A549 (cell line): ENCODE measurements at regions of chr7 and their contacts with region 1.

Region 1: DNA sequence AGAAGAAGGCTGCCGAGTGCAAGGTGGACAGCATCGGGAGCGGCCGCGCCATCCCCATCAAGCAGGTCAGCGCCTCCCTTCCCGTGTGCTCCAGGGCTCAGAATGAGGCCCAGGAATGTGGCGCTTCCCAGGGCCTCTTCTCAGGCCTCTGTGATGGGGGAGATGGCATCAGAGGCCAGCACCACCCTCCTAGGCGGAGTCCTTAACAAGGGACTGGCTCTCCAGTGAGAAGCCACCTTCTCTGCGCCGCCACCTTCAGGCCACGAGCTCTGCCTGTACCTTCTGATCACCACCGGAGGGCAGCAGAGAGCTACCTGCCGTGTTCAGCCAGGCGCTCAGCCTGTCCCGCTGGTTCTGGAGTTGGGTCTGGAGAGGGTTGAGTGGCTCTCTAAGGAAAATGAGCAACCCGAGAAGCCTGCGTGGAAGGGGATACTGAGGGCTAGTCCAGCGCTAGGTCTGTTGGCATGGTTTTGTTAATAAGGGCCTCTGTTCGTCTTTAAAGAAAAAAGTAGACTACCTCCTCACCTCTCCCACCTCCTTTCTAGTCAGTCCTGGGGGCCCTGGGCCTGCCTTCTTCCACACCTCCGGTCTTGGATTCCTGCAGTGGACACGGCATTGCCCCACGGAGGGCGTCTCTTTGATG is 37.7 kb downstream of the AGAP3 start:
- DNase-seq: peak; percentile 85 to 94
- ATAC-seq: peak; percentile 90 to 96
- H3K4me3 ChIP-seq: no peak overlapping the region
- H3K27ac ChIP-seq: no peak overlapping the region
- H3K4me1 ChIP-seq: no peaks in the 10 kb centered on the region
- CTCF ChIP-seq: peak; percentile 97
- EP300 ChIP-seq: no peak
- POLR2A ChIP-seq: no peak
- RAD21 ChIP-seq: peak; percentile 85 to 87

Region 2: GRCh38 chr7:150793569-150794238 is 330.2 kb before region 1 on chr7:
- CTCF ChIA-PET with region 1: no interaction called
- POLR2A ChIA-PET with region 1: no interaction called
- DNase-seq: no peak
- ATAC-seq: no peak
- H3K4me3 ChIP-seq: no peak overlapping the region
- H3K27ac ChIP-seq: no peak overlapping the region
- H3K4me1 ChIP-seq: no peaks in the 10 kb centered on the region
- CTCF ChIP-seq: no peak
- EP300 ChIP-seq: no peak
- POLR2A ChIP-seq: no peak
- RAD21 ChIP-seq: no peak

Region 3: DNA sequence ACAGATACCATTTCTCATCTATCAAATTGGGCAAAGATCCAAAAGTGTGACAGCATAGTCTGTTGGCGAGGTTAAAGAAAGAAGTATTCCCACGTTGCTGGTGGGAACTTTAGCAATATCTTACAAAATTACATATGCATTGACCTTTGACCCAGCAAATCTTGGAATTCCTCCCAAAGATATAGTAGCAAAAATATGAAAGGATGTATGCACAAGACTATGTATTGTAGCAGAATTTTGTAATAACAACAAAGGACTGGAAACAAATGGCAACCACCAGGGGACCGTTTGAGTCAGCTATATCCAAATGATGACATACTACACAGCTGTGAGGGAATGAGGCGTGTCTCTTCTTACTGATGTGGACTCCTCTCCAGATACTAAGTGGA is 196.0 kb before region 1 on chr7:
- CTCF ChIA-PET with region 1: no interaction called
- POLR2A ChIA-PET with region 1: no interaction called
- DNase-seq: peak; percentile 27 to 38
- ATAC-seq: peak; percentile 72 to 78
- H3K4me3 ChIP-seq: no peak overlapping the region
- H3K27ac ChIP-seq: no peak overlapping the region
- H3K4me1 ChIP-seq: no peaks in the 10 kb centered on the region; the same call in 2 of the 3 replicates
- CTCF ChIP-seq: no peak
- EP300 ChIP-seq: no peak
- POLR2A ChIP-seq: no peak
- RAD21 ChIP-seq: no peak

Region 4: DNA sequence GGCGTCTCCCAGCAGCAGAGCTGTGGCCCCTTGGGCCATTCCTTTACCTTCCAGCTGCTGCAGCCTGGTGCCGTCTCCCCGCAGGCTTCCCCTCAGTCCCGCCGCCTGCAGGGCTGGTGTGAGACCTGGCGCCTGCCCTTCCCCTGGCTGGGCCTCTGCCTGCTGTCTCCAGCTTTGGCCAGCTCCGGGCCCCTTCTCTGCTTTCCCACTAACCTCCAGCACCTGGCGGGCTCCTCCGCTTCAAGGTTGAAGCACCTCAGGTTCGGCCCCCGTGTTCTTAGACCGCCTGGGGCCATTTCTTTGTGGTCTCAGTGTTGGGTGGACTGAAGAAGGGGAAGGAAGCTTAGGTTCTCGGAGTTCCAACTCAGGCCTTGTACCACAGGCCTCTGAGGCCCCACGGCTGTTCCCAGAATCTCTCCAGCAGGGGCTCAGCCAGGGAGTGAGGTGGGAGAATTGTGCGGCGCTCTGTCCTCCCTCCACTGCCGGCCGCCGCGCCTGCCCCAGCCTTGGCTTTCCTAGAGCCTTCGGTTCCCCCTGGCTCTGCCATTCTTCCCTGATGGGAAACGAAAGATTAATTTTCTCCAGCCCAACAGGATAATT is 13.2 kb after region 1 on chr7:
- CTCF ChIA-PET with region 1: interaction called, 40 read pairs
- POLR2A ChIA-PET with region 1: no interaction called
- DNase-seq: no peak
- ATAC-seq: no peak
- H3K4me3 ChIP-seq: no peak overlapping the region
- H3K27ac ChIP-seq: no peak overlapping the region
- H3K4me1 ChIP-seq: no peaks in the 10 kb centered on the region
- CTCF ChIP-seq: no peak
- EP300 ChIP-seq: no peak
- POLR2A ChIP-seq: no peak
- RAD21 ChIP-seq: no peak

Region 5: GRCh38 chr7:151143261-151144015 is 19.5 kb after region 1 on chr7:
- CTCF ChIA-PET with region 1: interaction called, 40 read pairs
- POLR2A ChIA-PET with region 1: no interaction called
- DNase-seq: no peak
- ATAC-seq: no peak
- H3K4me3 ChIP-seq: no peak overlapping the region
- H3K27ac ChIP-seq: no peak overlapping the region
- H3K4me1 ChIP-seq: no peaks in the 10 kb centered on the region
- CTCF ChIP-seq: no peak
- EP300 ChIP-seq: no peak
- POLR2A ChIP-seq: no peak
- RAD21 ChIP-seq: no peak

Region 6: DNA sequence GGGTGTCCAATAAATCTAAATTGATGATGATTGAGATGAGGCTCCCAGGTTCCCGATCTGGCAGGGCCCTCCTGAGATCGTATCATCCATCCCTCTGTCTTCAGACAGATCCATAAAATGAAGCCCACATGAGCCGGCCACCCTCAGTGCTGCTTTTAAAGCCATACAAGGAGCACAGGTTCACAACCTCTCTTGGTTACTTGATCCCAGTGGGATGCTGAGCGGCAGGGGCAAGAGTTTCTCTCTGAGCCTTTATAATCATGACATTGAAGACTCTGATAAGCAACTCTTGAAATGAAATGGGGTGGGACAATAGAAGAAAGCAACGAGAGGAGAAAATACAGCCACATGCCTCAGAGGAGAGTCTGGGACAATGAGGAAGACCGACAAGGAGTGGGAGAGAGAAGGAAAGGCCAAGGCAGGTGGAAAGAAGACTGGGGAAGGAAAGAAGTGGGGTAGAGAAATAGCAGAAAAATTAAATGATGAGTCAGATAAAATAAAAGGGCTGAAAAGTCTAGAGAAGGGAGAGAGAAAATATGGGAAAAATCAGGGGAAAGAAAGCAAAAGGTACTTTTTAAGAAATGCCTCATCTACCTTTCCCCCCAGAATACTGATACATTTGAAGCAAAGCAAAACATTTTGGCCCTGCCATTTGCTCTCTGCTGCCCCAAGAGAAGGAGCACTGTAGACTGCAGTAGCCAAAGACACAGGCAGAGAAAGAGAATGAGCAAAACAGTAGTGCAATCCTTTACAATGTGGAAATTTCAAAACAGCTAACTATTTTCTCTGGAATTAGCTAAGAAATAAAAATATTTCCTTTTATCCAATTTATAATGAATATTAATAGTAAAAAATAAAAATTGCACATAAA is 28.9 kb after region 1 on chr7:
- CTCF ChIA-PET with region 1: interaction called, 11 read pairs
- POLR2A ChIA-PET with region 1: no interaction called
- DNase-seq: no peak
- ATAC-seq: peak; percentile 49; a peak in 2 of 6 replicates
- H3K4me3 ChIP-seq: no peak overlapping the region
- H3K27ac ChIP-seq: no peak overlapping the region
- H3K4me1 ChIP-seq: peaks cover 7% of the 10 kb centered on the region; the same call in 2 of the 3 replicates
- CTCF ChIP-seq: no peak
- EP300 ChIP-seq: no peak
- POLR2A ChIP-seq: no peak
- RAD21 ChIP-seq: no peak

Region 7: GRCh38 chr7:151181011-151181431 is 57.1 kb after region 1 on chr7:
- CTCF ChIA-PET with region 1: interaction called, 34 read pairs
- POLR2A ChIA-PET with region 1: no interaction called
- DNase-seq: no peak
- ATAC-seq: no peak
- H3K4me3 ChIP-seq: no peak overlapping the region
- H3K27ac ChIP-seq: no peak overlapping the region
- H3K4me1 ChIP-seq: no peaks in the 10 kb centered on the region
- CTCF ChIP-seq: no peak
- EP300 ChIP-seq: no peak
- POLR2A ChIP-seq: no peak
- RAD21 ChIP-seq: no peak

Region 8: DNA sequence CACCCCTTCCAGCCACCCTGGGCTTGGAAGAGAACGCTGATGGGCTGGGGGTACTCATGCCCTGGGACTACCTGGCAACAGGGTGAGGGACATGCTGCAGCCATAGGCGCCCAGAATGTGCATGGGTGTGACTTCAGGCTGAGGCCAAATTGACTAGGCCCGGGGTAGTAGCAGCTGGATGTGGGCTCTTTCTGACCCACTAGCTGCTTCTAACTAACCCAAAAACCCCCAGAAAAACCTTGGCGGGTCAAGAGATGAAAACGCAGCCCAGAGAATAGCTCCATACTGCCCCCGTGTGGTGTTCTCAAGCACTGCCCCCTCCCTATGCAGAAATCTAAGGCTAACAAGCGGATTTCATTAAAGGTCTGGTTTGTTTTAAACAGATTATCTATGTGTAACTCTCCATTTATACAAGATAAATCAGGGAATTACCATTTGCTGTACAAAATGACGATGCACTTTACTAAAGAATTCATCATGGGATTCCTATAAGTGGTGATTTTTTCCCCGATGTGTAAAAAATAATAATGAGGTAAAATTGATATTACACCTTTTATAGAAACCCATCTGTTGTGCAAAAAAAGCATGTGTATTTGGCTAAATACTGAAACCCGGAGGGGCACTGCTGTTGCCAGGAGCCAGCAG is 120.4 kb after region 1 on chr7:
- CTCF ChIA-PET with region 1: interaction called, 25 read pairs
- POLR2A ChIA-PET with region 1: no interaction called
- DNase-seq: peak; percentile 42 to 73
- ATAC-seq: no peak
- H3K4me3 ChIP-seq: no peak overlapping the region
- H3K27ac ChIP-seq: no peak overlapping the region
- H3K4me1 ChIP-seq: peaks cover 53% of the 10 kb centered on the region
- CTCF ChIP-seq: peak; percentile 82
- EP300 ChIP-seq: no peak
- POLR2A ChIP-seq: no peak
- RAD21 ChIP-seq: peak; percentile 48 to 54

Region 9: DNA sequence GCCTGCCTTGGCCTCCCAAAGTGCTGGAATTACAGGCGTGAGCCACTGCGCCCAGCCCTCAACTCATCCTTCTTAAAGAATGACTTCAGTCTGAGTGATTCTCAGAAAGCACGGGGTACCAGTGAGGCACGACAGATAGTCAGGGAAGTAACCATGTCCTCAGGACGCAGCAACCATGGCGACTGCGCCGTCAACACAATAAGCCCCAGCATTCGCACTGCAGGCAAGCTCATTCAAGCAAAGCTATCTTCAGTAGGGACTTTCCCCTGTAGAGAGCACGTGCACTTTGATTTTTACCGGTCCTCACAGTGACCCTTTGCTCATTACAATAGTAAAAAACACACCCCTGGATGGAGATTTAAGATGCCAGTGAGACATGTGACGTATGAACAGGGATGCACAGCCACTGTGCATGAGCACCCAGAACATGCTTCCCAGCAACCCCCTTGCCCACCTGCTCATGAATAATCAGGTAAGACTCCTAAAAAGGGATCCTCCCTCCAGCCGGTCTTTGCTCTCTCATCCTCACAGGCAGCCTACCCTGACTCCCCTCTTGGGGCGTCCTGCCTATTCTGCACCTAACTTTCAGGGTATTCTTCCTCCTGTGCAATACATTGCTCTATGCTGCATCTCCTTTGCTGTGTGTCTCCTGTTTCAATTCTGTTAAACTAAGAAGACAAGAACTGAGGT is 276.8 kb after region 1 on chr7:
- CTCF ChIA-PET with region 1: no interaction called
- POLR2A ChIA-PET with region 1: no interaction called
- DNase-seq: no peak
- ATAC-seq: no peak
- H3K4me3 ChIP-seq: no peak overlapping the region
- H3K27ac ChIP-seq: no peak overlapping the region; a peak in 1 of 6 replicates
- H3K4me1 ChIP-seq: peaks cover 20% of the 10 kb centered on the region
- CTCF ChIP-seq: no peak
- EP300 ChIP-seq: no peak
- POLR2A ChIP-seq: no peak
- RAD21 ChIP-seq: no peak